Activated B cell treated with CpG ODN at 0.5 μM for 24 hours (primary cell): ENCODE measurements at regions of chr10 and their contacts with region 1.

Region 1: GRCh38 chr10:70363971-70364771 is 18.3 kb downstream of the LRRC20 start:
- DNase-seq: peak; percentile 74
- ATAC-seq: peak; percentile 99
- H3K4me3 Mint-ChIP-seq: peak overlapping the region; percentile 24
- H3K27ac Mint-ChIP-seq: no peak overlapping the region
- H3K4me1 Mint-ChIP-seq: peaks cover 15% of the 10 kb centered on the region
- H3K27me3 Mint-ChIP-seq: peaks cover 2% of the 10 kb centered on the region
- CTCF ChIP-seq: peak; percentile 25

Region 2: DNA sequence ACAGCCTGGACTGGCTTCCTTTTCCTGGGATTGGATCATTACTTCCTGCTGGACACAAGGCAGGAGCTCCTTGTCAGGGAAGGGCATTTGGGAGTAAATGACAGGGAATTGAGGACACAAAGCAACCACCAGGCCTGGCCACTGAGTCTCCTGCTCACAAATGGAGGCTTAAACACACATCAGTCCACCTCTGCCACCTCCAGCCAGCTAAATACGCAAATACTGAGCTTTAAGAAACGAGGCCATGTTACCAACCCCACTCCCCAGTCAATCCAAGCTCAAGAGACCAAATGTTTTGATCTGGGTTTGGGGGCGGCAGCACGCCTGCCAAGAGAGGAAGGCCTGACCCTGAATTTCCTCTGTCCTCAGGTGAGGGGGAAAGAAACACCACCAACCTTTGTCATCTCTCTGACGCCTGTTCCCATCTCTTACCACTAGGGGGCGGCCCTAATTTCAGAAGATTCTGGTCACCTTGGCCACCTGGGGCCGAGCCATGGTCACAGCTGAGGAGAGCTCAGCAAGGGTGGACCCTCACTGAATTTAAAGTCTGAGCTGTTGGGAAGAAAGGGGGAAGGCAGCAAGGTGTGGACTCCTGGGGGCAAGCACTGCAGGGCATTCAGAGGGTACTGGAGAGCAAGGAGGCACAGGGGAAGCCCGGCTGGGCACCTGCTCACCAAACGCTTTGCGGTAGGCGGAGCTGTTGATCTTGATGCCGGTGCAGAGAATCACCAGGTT is 248.1 kb before region 1 on chr10:
- CTCF ChIA-PET with region 1: interaction called, 6 read pairs
- POLR2A ChIA-PET with region 1: interaction called, 3 read pairs
- intact Hi-C with region 1: loop called (anchors 5 kb)
- DNase-seq: peak; percentile 31
- ATAC-seq: peak; percentile 74
- H3K4me3 Mint-ChIP-seq: no peak overlapping the region
- H3K27ac Mint-ChIP-seq: no peak overlapping the region
- H3K4me1 Mint-ChIP-seq: peaks cover 4% of the 10 kb centered on the region
- H3K27me3 Mint-ChIP-seq: no peaks in the 10 kb centered on the region
- CTCF ChIP-seq: peak; percentile 94

Region 3: GRCh38 chr10:70233109-70233938 is 130.8 kb before region 1 on chr10 and contains the start of gene PPA1:
- CTCF ChIA-PET with region 1: interaction called, 373 read pairs
- POLR2A ChIA-PET with region 1: interaction called, 13 read pairs
- intact Hi-C with region 1: loop called (anchors 2 kb)
- DNase-seq: peak; percentile 100
- ATAC-seq: peak; percentile 96
- H3K4me3 Mint-ChIP-seq: peak within 1 kb of the TSS; percentile 92
- H3K27ac Mint-ChIP-seq: peak within 1 kb of the TSS; percentile 92
- H3K4me1 Mint-ChIP-seq: peaks cover 17% of the 10 kb centered on the region
- H3K27me3 Mint-ChIP-seq: no peaks in the 10 kb centered on the region
- CTCF ChIP-seq: no peak
- total RNA-seq, gene PPA1: 107 and 118 TPM in 2 replicates

Region 4: DNA sequence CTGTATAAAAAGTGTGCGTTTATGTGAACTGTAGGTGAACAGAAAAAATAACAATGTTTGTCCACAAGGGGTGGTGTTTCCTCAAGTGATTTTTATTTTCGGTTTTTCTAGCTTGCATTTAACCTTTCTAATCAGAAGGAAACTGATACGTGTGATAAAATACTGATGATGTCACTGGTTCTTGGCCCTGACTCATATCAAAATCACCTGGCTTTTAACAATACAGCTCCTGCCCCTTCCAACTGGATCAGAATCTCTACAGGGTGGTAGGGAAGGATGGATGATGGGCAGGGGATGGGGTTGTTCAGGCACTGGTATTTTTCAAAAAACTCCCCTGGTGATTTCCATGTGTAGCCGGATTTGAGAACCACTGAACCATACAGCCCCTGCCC is 91.2 kb before region 1 on chr10:
- CTCF ChIA-PET with region 1: interaction called, 204 read pairs
- POLR2A ChIA-PET with region 1: interaction called, 6 read pairs
- intact Hi-C with region 1: loop called (anchors 1 kb)
- DNase-seq: no peak
- ATAC-seq: peak; percentile 86
- H3K4me3 Mint-ChIP-seq: peak overlapping the region; percentile 57
- H3K27ac Mint-ChIP-seq: peak overlapping the region; percentile 83
- H3K4me1 Mint-ChIP-seq: peaks cover 33% of the 10 kb centered on the region
- H3K27me3 Mint-ChIP-seq: no peaks in the 10 kb centered on the region
- CTCF ChIP-seq: no peak

Region 5: GRCh38 chr10:70348228-70348850 is 15.8 kb before region 1 on chr10:
- CTCF ChIA-PET with region 1: interaction called, 14 read pairs
- POLR2A ChIA-PET with region 1: no interaction called
- intact Hi-C with region 1: no loop called
- DNase-seq: no peak
- ATAC-seq: peak; percentile 71
- H3K4me3 Mint-ChIP-seq: no peak overlapping the region
- H3K27ac Mint-ChIP-seq: no peak overlapping the region
- H3K4me1 Mint-ChIP-seq: no peaks in the 10 kb centered on the region
- H3K27me3 Mint-ChIP-seq: no peaks in the 10 kb centered on the region
- CTCF ChIP-seq: no peak

Region 6: DNA sequence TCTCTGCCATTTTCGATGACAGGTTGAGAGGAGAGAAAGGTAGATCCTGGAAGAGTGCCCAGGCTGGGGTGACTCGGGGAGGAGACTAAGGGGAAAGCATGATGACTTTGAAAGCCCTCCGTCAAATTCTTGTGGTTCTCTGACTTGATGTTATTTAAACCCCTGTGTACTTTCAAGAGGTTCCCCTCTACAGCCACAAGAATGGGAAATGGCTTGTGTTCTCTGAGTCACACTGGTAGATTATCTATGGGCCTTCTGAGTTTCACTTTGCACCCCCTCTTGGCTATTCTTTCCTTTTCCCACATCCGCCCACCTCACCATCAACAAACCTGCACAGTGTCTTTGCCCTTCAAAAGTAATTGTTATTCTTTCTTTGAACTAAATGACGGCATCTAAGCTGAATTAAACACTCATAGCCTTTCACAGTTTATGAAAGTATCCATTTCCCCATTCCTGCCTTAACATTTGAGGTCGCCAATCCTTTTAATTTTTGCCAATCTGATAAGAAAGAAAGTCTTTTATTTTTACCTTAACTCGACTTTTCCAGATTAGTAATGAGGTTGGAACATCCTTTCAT is 214.3 kb after region 1 on chr10:
- CTCF ChIA-PET with region 1: no interaction called
- POLR2A ChIA-PET with region 1: no interaction called
- intact Hi-C with region 1: no loop called
- DNase-seq: no peak
- ATAC-seq: no peak
- H3K4me3 Mint-ChIP-seq: peak overlapping the region; percentile 0
- H3K27ac Mint-ChIP-seq: no peak overlapping the region
- H3K4me1 Mint-ChIP-seq: peaks cover 55% of the 10 kb centered on the region
- H3K27me3 Mint-ChIP-seq: no peaks in the 10 kb centered on the region
- CTCF ChIP-seq: no peak

Region 7: DNA sequence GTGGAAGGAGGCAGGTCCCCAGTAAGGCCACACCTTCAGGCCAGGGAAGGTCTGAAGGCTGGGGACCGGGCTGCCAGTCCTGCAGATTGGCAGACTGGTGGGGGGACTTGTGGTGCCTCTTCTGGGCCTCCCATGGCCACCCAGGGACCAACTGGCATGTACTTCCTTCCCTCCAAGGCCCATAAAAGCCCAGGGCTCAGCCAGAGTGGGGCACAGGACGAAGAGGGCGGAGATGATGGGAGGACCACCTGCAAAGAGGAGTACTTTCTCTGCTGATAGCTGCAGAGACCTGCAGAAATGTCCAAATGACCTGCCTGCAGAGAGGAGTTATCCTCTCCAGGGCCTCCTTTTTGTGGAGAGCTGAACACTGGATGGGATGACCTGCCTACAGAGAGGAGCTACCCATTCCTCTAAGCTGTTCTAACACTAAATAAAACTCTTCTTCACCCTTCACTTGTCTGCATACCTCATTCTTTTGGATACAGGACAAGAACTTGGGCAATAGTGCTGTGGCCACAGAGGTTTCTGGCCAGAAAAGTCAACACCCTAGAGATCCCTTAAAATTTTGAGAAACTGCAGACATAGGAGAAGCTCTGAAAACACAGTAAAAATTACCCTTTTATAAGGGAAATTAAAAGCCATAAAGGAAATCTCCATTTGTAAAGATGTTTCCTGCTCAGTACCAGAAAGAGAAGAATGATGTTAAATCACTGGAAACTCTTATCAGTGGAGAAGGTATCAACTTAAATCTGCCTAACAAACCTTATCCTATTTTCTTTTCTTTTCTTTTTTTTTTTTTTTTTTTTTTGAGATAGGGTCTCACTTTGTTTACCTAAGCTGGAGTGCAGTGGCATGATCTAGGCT is 259.0 kb after region 1 on chr10:
- CTCF ChIA-PET with region 1: no interaction called
- POLR2A ChIA-PET with region 1: no interaction called
- intact Hi-C with region 1: no loop called
- DNase-seq: no peak
- ATAC-seq: no peak
- H3K4me3 Mint-ChIP-seq: no peak overlapping the region
- H3K27ac Mint-ChIP-seq: no peak overlapping the region
- H3K4me1 Mint-ChIP-seq: no peaks in the 10 kb centered on the region
- H3K27me3 Mint-ChIP-seq: peaks cover 4% of the 10 kb centered on the region
- CTCF ChIP-seq: no peak